ENCODE measurements at regions of chr13 and their contacts with region 1.

Region 1: DNA sequence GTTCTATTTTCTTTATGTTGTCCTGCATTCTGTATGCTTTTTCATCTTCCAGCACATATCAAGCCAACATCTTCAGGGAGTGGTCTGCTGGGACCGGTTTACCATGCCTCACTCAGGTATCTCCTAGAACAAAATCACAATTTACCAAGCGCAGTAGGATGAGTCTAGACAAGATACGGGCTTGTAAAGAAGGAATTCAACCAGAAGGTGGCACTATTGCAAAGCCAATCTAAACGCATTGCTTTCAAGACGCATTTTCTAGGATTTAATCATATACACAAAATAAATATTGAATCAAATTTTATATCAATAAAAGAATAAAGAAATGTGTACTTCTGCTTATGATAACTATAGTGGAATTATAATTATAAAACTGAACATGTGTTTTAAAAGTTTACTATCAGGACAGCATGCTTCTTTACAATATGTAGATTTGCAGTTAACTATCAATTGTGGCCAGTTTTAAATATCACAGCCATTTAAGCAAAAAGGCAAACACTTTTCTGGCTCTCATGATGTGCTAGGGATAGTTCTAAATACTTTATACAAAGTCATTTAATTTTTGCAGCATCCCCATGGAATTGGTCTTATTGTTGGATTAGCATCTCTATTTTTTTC is 16.1 kb upstream of the TPP2 start:
- DNase-seq: no peak
- ATAC-seq: peak; percentile 80
- H3K4me3 Mint-ChIP-seq: no peak overlapping the region
- H3K27ac Mint-ChIP-seq: no peak overlapping the region
- H3K4me1 Mint-ChIP-seq: peaks cover 11% of the 10 kb centered on the region
- H3K27me3 Mint-ChIP-seq: peaks cover 8% of the 10 kb centered on the region

Region 2: GRCh38 chr13:102845630-102846260 is 265.1 kb after region 1 on chr13 and contains the start of gene ERCC5:
- CTCF ChIA-PET with region 1: interaction called, 12 read pairs
- DNase-seq: peak; percentile 97
- ATAC-seq: peak; percentile 88
- H3K4me3 Mint-ChIP-seq: peak within 1 kb of the TSS; percentile 99
- H3K27ac Mint-ChIP-seq: peak within 1 kb of the TSS; percentile 99
- H3K4me1 Mint-ChIP-seq: peaks cover 42% of the 10 kb centered on the region
- H3K27me3 Mint-ChIP-seq: no peaks in the 10 kb centered on the region
- total RNA-seq, gene ERCC5: 75.8 to 76.1 TPM